Mammary epithelial cell (primary cell): ENCODE measurements at regions of chr20 and their contacts with region 1.

Region 1: DNA sequence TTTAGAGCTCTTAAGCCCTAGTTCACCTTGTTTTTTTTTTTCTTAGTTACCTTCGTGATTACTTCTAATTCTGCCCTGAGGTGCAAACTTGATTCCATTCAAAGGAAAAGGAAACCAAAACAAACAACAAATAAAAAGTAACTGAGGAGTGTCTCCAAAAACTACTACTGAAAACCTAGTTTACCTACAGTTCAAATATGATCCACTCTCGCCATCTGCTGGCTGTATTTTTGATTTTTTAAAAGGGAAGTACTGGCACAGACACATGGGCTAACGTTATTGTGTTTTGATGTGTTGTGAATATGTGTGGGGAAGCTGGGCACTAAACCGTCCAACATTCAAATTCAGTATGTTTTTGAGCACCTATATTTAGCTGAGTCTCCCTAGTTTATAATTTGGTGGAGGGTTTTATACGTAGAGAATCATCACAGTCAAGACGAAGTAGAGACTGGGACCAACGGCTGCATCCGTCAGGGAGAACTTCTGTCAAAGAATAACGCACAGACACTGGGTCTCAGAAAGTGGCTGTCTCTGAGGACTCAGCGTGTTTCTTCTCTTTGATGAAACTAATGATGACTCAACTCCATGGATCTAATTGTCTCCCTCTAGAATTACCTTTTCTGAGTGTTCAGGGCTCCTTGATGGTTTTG is 373.5 kb upstream of the BTBD3 start:
- DNase-seq: peak; percentile 79
- H3K4me3 ChIP-seq: peak overlapping the region in 2 of 3 experiments; percentile 16 to 31
- H3K27ac ChIP-seq: peak overlapping the region; percentile 88
- H3K4me1 ChIP-seq: peaks cover 17% of the 10 kb centered on the region
- H3K27me3 ChIP-seq: no peaks in the 10 kb centered on the region
- CTCF ChIP-seq: peak; percentile 38 to 60

Region 2: GRCh38 chr20:10469599-10469998 is 1074.6 kb before region 1 on chr20:
- CTCF ChIA-PET with region 1: no interaction called
- dilution Hi-C with region 1: no loop called
- in situ Hi-C with region 1: loop called in 1 of 2 experiments (anchors 25 kb)
- intact Hi-C with region 1: loop called (anchors 5 kb)
- DNase-seq: peak; percentile 73
- H3K4me3 ChIP-seq: no peak overlapping the region
- H3K27ac ChIP-seq: peak overlapping the region; percentile 37
- H3K4me1 ChIP-seq: peaks cover 20% of the 10 kb centered on the region
- H3K27me3 ChIP-seq: no peaks in the 10 kb centered on the region
- CTCF ChIP-seq: peak; percentile 73 to 75

Region 3: DNA sequence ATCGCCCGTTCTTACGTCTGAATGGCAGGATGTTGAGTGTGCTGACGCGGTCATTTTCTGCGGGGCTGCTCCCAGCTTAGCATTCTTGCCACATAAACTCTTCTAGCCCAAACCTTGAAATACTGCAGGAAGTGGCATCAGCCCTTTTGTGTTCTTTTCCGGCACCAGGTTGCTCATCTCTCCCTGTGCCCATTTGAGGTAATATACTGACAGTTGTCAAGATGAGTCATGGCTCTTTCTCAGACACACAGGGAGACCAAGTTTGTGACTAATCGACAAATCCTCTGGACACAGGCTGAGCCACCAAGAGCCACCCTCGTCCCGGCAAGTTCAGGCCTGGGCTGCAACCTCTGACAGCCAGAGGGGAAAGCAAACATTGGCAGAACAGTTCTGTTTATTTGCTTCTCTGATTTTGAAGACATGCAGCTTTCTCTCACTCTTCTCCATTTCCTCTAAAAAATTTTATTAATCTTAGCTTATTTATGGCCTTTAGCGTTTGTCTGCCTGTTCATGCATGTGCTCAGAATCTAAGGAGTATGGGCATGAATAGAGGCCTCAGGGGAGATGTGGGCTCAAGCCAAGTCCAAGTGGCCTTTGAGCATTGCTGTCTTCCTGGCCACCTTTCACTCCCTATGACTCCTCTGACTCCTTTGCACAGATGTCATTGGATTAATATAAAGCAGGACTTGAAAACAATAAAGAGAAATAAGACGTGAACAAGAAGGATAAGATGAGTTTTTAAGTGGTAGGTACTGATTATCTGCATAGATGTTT is 542.2 kb before region 1 on chr20:
- CTCF ChIA-PET with region 1: no interaction called
- dilution Hi-C with region 1: no loop called
- in situ Hi-C with region 1: no loop called
- intact Hi-C with region 1: loop called (anchors 1 kb)
- DNase-seq: peak; percentile 99
- H3K4me3 ChIP-seq: no peak overlapping the region
- H3K27ac ChIP-seq: peak overlapping the region; percentile 89
- H3K4me1 ChIP-seq: peaks cover 35% of the 10 kb centered on the region
- H3K27me3 ChIP-seq: no peaks in the 10 kb centered on the region
- CTCF ChIP-seq: no peak

Region 4: DNA sequence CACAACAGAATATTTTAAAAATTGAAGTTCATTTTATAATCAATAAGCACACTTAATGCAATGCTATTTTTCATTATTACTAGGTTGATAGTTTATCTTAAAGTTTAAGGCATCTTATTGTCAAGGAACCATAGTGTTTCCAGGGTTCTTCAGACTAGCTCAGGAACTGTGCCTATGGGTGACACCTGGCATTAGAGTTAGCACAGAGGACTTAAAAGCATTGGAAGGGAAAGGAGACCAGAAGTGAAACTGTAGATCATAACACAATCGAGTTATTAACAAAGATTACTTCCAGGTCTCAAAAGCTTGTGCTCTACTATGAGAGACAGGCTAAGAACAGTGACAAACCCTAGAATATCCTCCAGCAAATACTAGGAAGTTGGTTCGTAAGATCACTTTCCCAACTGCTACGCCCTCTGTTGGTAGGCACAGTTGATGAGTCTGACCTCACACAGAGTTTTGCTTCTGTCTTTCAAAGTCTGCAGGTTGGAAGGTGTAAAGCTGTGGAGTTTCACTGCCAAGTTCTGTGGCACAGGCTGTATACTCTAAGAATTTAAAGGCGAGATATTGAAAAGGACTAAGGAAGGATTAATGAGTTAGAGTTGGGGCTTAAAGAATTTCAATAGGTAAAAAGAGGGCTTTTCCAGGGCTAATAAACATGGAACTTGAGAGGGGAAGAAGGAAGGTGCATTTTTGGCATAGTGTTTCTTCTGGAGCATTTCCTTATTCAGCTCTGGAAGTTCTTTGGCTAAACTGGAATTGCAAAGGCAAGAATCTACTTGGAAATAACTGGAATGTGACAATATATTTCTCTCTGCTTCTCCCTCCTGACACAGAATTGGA is 339.0 kb before region 1 on chr20:
- CTCF ChIA-PET with region 1: no interaction called
- dilution Hi-C with region 1: no loop called
- in situ Hi-C with region 1: no loop called
- intact Hi-C with region 1: loop called (anchors 2 kb)
- DNase-seq: peak; percentile 69
- H3K4me3 ChIP-seq: no peak overlapping the region
- H3K27ac ChIP-seq: peak overlapping the region; percentile 65
- H3K4me1 ChIP-seq: peaks cover 46% of the 10 kb centered on the region
- H3K27me3 ChIP-seq: no peaks in the 10 kb centered on the region
- CTCF ChIP-seq: peak; percentile 84 to 95

Region 5: GRCh38 chr20:11260611-11261010 is 283.5 kb before region 1 on chr20:
- CTCF ChIA-PET with region 1: no interaction called
- dilution Hi-C with region 1: no loop called
- in situ Hi-C with region 1: no loop called
- intact Hi-C with region 1: no loop called
- DNase-seq: peak; percentile 80
- H3K4me3 ChIP-seq: no peak overlapping the region
- H3K27ac ChIP-seq: peak overlapping the region; percentile 28
- H3K4me1 ChIP-seq: peaks cover 15% of the 10 kb centered on the region
- H3K27me3 ChIP-seq: no peaks in the 10 kb centered on the region
- CTCF ChIP-seq: no peak

Region 6: DNA sequence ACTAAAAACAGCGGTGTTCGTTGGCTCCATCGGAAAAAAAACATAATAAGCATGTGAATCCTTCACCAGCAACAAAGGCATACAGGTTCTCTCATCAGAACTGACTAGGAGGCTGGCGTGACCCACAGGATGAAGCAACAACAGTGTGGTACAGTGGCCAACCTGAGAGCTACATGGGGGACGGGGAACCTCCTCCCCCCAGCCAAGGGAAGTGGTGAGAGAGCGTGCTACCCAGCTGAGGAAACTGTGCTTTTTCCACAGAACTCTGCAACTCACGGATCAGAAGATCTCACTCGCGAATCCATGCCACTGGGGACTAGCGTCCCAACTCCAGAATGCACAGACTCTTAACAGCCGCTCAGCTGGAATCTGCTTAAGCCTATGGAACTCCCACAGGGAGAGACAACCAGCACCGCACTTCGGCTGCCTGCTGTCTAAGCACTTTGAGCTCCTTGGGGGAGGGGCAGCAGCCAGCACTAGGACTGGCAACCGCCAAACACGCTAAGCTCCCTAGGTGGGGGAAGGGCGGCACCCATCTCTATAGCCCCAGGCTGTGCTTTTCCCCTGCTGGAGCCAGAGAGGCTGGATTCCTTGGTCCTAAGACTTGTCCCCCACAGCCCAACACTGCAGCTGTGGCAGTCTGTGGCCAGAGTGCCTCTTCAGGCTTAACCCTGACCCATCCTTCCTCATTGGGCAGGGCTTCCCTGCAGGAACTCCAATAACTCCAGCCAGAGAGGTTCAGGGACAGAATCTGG is 164.7 kb before region 1 on chr20:
- CTCF ChIA-PET with region 1: no interaction called
- dilution Hi-C with region 1: no loop called
- in situ Hi-C with region 1: loop called in 1 of 2 experiments (anchors 25 kb)
- intact Hi-C with region 1: no loop called
- DNase-seq: no peak
- H3K4me3 ChIP-seq: no peak overlapping the region
- H3K27ac ChIP-seq: no peak overlapping the region
- H3K4me1 ChIP-seq: peaks cover 40% of the 10 kb centered on the region
- H3K27me3 ChIP-seq: no peaks in the 10 kb centered on the region
- CTCF ChIP-seq: no peak

Region 7: GRCh38 chr20:11436113-11436905 is 107.8 kb before region 1 on chr20:
- CTCF ChIA-PET with region 1: no interaction called
- dilution Hi-C with region 1: no loop called
- in situ Hi-C with region 1: no loop called
- intact Hi-C with region 1: loop called (anchors 5 kb)
- DNase-seq: no peak
- H3K4me3 ChIP-seq: no peak overlapping the region
- H3K27ac ChIP-seq: no peak overlapping the region
- H3K4me1 ChIP-seq: peaks cover 11% of the 10 kb centered on the region
- H3K27me3 ChIP-seq: no peaks in the 10 kb centered on the region
- CTCF ChIP-seq: no peak

Region 8: DNA sequence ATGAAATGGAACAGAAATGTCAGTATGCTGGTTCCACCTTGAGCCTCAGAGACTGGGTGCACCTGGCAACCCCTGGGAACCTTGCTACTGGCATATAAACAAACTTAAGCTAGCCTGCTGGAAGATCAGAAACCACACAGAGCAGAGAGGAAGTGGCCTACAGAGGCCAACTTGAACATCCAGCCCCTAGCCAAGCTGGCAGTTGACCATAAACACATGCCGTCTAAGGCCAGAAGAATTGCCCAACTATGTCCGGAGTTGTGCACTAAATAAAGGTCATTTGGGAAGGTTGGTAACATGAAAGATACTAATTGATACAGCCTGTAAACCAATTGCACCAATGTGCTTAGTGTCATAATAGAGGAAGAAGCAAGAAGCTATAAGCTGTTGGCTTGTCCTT is 107.0 kb after region 1 on chr20:
- CTCF ChIA-PET with region 1: no interaction called
- dilution Hi-C with region 1: no loop called
- in situ Hi-C with region 1: no loop called
- intact Hi-C with region 1: no loop called
- DNase-seq: no peak
- H3K4me3 ChIP-seq: no peak overlapping the region
- H3K27ac ChIP-seq: no peak overlapping the region
- H3K4me1 ChIP-seq: no peaks in the 10 kb centered on the region
- H3K27me3 ChIP-seq: no peaks in the 10 kb centered on the region
- CTCF ChIP-seq: no peak